ENCODE measurements at regions of chr3 and their contacts with region 1.

Region 1: DNA sequence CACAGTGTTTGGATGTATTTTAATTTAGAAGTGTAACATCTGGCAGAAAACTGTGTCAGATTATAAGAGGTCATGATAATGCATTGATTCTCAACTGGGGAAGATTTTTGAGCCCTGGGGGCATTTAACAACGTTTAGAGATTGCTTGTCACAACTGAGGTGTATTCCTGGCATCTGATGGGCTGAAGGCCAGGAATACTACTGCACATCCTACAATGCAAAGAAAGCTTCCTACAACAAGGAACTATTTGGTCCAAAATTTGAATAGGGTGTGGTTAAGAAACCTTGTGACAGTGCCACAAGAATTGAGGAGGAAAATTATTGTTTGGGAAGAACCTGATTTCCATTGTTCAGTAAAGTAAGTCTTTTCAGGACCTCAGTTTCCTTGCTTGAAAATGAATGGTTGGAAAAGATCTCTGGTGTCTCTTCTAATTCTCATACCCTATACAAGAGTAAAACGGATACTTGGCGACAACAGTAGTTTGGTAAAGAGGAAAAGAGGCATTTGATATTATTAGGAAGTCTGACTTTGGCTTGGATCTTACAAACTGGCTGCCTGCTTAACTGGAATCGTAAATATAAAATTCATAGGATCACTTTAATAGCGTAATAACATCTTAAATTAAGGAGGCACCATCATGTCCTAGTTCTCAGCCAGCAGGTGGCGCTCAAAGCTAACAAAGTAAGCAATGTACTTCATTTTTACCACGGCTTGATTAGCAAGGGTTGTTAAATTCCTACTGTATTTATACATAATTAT is 4.3 kb downstream of the DAZL start:
- DNase-seq: peak; percentile 69 to 92 (median 81)
- ATAC-seq: peak; percentile 39
- H3K4me3 ChIP-seq: no peak overlapping the region
- H3K4me3 Mint-ChIP-seq: no peak overlapping the region
- H3K27ac ChIP-seq: no peak overlapping the region
- H3K27ac Mint-ChIP-seq: no peak overlapping the region
- H3K4me1 ChIP-seq: no peaks in the 10 kb centered on the region
- H3K4me1 Mint-ChIP-seq: peaks cover 17% of the 10 kb centered on the region
- H3K27me3 ChIP-seq: no peaks in the 10 kb centered on the region
- H3K27me3 Mint-ChIP-seq: no peaks in the 10 kb centered on the region
- CTCF ChIP-seq: peak; percentile 96

Region 2: DNA sequence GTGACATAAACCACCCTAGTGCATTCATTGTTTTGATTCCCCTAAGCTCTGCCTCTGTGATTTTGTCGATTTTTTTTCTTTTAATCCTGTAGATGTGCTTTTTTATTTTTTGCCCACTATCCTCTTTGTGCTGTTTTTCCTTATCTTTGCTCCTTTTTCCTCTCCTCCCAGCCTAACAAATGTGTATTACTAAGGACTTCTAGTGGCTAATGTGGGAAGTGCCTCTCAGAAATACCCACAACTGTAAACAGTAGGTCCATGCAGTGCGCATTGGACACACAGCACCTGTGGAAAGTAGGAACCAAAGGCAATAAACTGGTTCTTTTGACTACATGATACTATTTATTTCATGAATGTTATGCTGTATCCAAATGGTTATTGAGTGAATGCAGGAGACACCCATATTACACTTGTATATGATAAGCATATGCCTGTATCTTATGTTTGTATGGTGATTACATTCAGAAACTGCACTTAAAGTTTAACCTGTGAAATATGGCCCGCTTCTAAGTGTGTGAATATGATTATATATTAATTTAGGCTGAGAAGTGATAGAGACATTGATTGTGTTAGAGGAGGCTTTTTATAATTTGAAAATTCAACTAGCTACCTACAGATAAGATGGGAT is 431.6 kb after region 1 on chr3:
- CTCF ChIA-PET with region 1: no interaction called
- POLR2A ChIA-PET with region 1: no interaction called
- intact Hi-C with region 1: loop called in 1 of 2 experiments (anchors 10 kb)
- DNase-seq: peak in 2 of 14 experiments; percentile 16 to 19
- ATAC-seq: no peak
- H3K4me3 ChIP-seq: no peak overlapping the region
- H3K4me3 Mint-ChIP-seq: no peak overlapping the region
- H3K27ac ChIP-seq: no peak overlapping the region
- H3K27ac Mint-ChIP-seq: no peak overlapping the region
- H3K4me1 ChIP-seq: peaks cover 17% of the 10 kb centered on the region
- H3K4me1 Mint-ChIP-seq: peaks cover 85% of the 10 kb centered on the region
- H3K27me3 ChIP-seq: no peaks in the 10 kb centered on the region
- H3K27me3 Mint-ChIP-seq: no peaks in the 10 kb centered on the region
- CTCF ChIP-seq: peak; percentile 52

Region 3: GRCh38 chr3:17233398-17233800 is 632.4 kb after region 1 on chr3:
- CTCF ChIA-PET with region 1: interaction called, 11 read pairs
- POLR2A ChIA-PET with region 1: interaction called, 3 read pairs
- intact Hi-C with region 1: loop called (anchors 1 kb)
- DNase-seq: peak in 10 of 14 experiments; percentile 1 to 79 (median 24)
- ATAC-seq: peak; percentile 100
- H3K4me3 ChIP-seq: no peak overlapping the region
- H3K4me3 Mint-ChIP-seq: peak overlapping the region; percentile 2
- H3K27ac ChIP-seq: no peak overlapping the region
- H3K27ac Mint-ChIP-seq: peak overlapping the region; percentile 25
- H3K4me1 ChIP-seq: no peaks in the 10 kb centered on the region
- H3K4me1 Mint-ChIP-seq: peaks cover 30% of the 10 kb centered on the region
- H3K27me3 ChIP-seq: no peaks in the 10 kb centered on the region
- H3K27me3 Mint-ChIP-seq: no peaks in the 10 kb centered on the region
- CTCF ChIP-seq: peak; percentile 82

Region 4: DNA sequence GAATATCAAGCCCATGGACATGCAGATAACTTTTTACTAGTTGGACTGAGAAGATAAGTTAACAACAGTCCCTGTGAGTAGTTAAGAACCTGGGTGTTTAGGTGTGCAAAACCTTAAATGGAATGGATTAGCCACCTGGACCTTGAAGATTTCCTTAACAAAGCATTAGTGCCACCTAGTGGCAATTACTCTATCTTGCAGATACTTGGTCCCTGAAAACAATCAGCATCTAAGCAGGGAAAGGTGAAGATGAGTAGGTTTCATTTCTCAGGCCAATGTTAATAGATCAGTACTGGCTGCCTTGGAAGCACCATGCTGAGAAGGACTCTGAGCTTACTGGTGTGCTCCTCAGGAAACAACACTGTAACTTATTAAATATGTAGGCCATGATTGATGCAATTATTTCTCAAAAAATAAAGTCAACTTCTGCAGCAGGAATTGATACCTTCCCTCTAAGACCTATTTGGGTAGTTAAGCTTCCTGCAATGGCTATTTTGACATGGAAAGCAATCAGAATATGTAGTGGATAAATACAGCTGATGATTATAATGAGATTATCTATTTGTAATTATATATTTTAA is 812.1 kb after region 1 on chr3:
- CTCF ChIA-PET with region 1: interaction called, 6 read pairs
- POLR2A ChIA-PET with region 1: no interaction called
- intact Hi-C with region 1: loop called (anchors 1 kb)
- DNase-seq: peak in 4 of 14 experiments; percentile 5 to 69 (median 66)
- ATAC-seq: peak; percentile 32
- H3K4me3 ChIP-seq: no peak overlapping the region
- H3K4me3 Mint-ChIP-seq: no peak overlapping the region
- H3K27ac ChIP-seq: no peak overlapping the region
- H3K27ac Mint-ChIP-seq: no peak overlapping the region
- H3K4me1 ChIP-seq: no peaks in the 10 kb centered on the region
- H3K4me1 Mint-ChIP-seq: no peaks in the 10 kb centered on the region
- H3K27me3 ChIP-seq: no peaks in the 10 kb centered on the region
- H3K27me3 Mint-ChIP-seq: no peaks in the 10 kb centered on the region
- CTCF ChIP-seq: peak; percentile 86